Panc1 (cell line): ENCODE measurements at regions of chr3 and their contacts with region 1.

Region 1: DNA sequence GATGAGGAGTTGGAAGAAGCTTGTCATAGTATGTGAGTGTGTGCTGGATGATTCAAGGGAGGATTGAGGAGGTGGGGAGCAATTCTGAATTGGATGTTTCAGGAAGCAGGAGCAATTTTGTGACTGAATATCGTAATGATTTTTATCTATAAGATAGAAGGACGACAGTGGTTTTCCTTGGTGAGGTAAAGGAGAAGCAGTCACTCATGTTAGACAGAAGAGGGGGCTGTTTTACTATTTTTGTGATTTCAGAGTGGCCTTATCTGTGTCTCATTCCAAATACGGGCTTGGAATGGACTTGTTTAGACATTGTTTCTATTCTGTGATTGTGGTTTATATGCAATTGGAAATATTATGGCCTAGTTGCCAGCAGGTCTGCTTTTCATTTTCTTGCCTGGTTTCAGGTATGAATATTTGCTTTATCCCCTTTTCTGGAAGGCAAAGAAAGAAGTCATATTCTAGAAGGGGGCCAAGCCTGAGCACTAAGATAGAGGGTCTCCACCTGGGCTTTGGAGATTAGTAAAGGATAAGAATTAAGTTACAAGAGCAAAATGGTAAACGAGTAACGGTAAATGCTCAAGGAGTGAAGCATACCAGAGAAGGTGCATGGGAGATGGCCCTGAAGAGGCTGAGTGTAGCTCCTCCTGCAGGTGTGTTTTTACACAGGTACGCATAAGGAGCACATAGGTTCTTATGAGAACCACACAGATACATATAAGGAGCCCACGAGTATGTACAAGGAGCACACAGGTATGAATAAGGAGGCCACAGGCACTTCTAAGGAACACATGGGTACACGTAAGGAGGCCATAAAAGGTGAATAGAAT is 124.6 kb upstream of the KCNAB1 start:
- DNase-seq: peak; percentile 5
- ATAC-seq: peak; percentile 93
- H3K4me3 ChIP-seq: no peak overlapping the region
- H3K27ac ChIP-seq: no peak overlapping the region
- H3K4me1 ChIP-seq: no peaks in the 10 kb centered on the region
- H3K27me3 ChIP-seq: peaks cover 6% of the 10 kb centered on the region
- CTCF ChIP-seq: peak; percentile 62

Region 2: GRCh38 chr3:155766206-155766605 is 229.5 kb before region 1 on chr3:
- CTCF ChIA-PET with region 1: no interaction called
- POLR2A ChIA-PET with region 1: no interaction called
- in situ Hi-C with region 1: no loop called
- intact Hi-C with region 1: no loop called
- DNase-seq: no peak
- ATAC-seq: no peak
- H3K4me3 ChIP-seq: no peak overlapping the region
- H3K27ac ChIP-seq: no peak overlapping the region
- H3K4me1 ChIP-seq: no peaks in the 10 kb centered on the region
- H3K27me3 ChIP-seq: no peaks in the 10 kb centered on the region
- CTCF ChIP-seq: no peak

Region 3: GRCh38 chr3:156535162-156535627 is 539.5 kb after region 1 on chr3:
- CTCF ChIA-PET with region 1: no interaction called
- POLR2A ChIA-PET with region 1: no interaction called
- in situ Hi-C with region 1: no loop called
- intact Hi-C with region 1: loop called (anchors 10 kb)
- DNase-seq: no peak
- ATAC-seq: peak; percentile 78
- H3K4me3 ChIP-seq: no peak overlapping the region
- H3K27ac ChIP-seq: no peak overlapping the region
- H3K4me1 ChIP-seq: no peaks in the 10 kb centered on the region
- H3K27me3 ChIP-seq: no peaks in the 10 kb centered on the region
- CTCF ChIP-seq: 0 out of 2 replicates have a peak, but pooled peaks have one; percentile 24